ENCODE measurements at regions of chr3 and their contacts with region 1.

Region 1: DNA sequence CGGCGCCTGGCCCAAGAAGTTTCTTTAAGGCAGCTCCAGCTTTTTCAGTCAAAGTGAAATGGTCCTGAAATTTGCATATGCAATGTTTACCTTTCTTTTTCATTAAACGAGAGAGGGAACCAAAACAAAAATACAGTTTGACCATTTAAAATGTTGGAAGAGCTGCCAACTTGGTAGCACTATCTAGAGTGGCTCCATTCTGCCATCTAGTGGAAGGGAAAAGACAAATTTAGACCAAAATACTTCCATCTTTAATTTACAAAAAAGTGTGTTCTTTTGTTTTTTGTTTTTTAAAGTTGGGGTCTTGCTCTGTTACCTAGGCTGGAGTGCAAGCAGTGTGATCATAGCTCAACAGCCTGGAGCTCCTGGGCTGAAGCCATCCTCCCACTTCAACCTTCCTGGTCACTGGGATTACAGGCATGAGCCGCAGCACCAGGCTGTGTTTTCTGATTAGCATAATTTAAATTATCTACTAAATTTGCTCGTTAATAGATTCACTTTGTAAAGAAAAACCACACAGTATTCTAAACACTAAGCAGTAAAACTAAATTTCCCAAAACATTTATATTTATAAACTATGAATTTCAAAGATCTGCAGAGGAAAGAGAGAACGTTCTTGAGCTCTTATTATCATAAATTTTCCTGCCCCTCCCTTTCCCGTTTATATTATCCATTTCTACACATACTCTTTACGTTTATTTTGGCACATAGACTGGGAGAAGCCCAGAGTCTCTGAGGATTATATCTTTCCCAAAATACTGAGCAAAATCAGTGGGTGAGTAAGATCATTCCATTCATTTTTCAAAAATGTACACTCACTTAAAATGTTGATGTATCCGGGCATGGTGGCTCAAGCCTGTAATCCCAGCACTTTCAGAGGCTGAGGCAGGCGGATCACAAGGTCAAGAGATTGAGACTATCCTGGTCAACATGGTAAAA is 15.4 kb upstream of the RFC4 start:
- DNase-seq: peak; percentile 72
- H3K4me3 ChIP-seq: peak overlapping the region; percentile 48
- CTCF ChIP-seq: peak; percentile 35

Region 2: DNA sequence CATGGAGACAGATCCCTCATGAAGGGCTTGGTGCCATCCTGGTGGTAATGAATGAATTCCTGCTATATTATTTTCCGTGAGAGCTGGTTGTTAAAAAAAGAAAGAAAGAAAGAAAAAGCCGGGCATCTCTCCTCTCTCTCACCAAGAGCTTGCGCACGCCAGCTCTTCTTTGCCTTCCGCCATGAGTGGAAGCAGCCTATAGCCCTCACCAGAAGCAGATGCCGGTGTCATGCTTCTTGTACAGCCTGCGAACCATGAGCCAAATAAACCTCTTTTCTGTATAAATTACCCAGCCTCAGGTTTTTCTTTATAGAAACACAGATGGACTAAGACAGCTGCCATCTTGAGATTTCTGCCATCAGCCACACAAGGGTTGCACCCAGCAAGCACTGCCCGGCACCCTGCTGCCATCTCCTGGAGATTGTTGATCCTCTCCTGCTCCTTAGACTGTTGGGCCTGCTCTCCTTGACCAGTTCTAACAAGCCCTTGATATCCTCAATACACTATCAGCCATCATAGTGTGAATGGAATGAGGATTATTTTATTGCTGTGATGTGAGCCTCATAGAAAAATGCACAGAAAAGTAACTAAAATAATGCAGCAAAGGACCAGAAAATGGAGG is 212.3 kb before region 1 on chr3:
- CTCF ChIA-PET with region 1: interaction called, 140 read pairs
- POLR2A ChIA-PET with region 1: no interaction called
- DNase-seq: no peak
- H3K4me3 ChIP-seq: no peak overlapping the region
- CTCF ChIP-seq: peak; percentile 28

Region 3: DNA sequence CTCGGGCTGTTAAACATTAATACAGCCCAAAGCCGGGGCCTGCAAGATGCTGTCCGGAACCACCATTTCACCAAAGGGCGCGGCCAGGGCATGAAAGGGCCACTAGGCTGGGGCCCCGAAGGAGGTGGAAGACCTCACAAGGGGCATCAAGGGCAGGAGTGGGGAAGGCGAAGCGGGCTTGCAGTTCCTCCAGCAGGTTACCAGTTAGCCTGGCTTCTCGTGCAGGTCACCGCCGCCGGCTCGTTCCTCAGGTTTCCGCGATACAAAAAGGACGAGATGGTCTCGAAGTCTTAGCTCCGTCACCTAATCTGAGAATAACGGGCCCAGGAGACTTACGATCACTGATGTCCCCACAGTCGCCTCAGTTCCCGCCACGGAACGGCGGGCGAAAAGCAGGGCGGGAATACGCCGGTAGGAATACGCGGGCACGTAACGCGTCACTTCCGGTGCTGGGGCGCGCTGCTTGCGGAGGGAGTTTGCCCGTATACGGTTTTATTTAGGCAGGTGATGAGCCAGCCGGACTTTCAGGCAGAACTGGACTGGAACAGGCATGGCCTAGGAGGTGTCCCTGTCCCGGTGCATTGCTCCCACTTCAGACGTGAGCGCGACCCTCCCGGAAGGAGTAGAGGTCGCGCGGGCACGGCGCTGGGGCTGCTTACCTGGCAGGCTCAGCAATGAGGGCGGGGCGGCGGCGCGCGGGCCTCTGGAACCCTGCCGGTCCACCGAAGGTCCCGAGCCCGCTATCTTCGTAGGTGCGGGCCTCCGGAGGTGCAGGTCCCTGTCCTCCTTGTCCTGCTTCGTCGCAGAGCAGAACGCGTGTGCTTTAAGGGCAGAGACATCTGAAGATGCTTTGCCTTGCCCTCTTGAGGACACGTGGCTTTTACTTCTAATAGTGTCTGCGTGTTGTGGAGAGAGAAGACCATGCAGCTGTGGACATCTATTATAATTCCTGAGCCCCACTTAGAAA is 15.3 kb before region 1 on chr3 and contains the start of gene RFC4:
- CTCF ChIA-PET with region 1: interaction called, 19 read pairs
- POLR2A ChIA-PET with region 1: interaction called, 3 read pairs
- DNase-seq: no peak
- H3K4me3 ChIP-seq: peak within 1 kb of the TSS; percentile 89
- CTCF ChIP-seq: no peak

Region 4: GRCh38 chr3:186831798-186832197 is 10.1 kb after region 1 on chr3:
- CTCF ChIA-PET with region 1: no interaction called
- POLR2A ChIA-PET with region 1: no interaction called
- DNase-seq: no peak
- H3K4me3 ChIP-seq: no peak overlapping the region
- CTCF ChIP-seq: no peak